T-cell (primary cell): ENCODE measurements at regions of chr19 and their contacts with region 1.

Region 1: GRCh38 chr19:54077334-54077733 is 3.8 kb downstream of the TARM1 start:
- DNase-seq: no peak
- ATAC-seq: no peak
- H3K4me3 ChIP-seq: no peak overlapping the region
- H3K4me3 Mint-ChIP-seq: no peak overlapping the region
- H3K27ac ChIP-seq: no peak overlapping the region
- H3K27ac Mint-ChIP-seq: no peak overlapping the region
- H3K4me1 ChIP-seq: no peaks in the 10 kb centered on the region
- H3K4me1 Mint-ChIP-seq: no peaks in the 10 kb centered on the region
- H3K27me3 ChIP-seq: peaks cover 0 to 18% of the 10 kb centered on the region in 2 experiments
- H3K27me3 Mint-ChIP-seq: peaks cover 0 to 5% of the 10 kb centered on the region in 2 donors

Region 2: DNA sequence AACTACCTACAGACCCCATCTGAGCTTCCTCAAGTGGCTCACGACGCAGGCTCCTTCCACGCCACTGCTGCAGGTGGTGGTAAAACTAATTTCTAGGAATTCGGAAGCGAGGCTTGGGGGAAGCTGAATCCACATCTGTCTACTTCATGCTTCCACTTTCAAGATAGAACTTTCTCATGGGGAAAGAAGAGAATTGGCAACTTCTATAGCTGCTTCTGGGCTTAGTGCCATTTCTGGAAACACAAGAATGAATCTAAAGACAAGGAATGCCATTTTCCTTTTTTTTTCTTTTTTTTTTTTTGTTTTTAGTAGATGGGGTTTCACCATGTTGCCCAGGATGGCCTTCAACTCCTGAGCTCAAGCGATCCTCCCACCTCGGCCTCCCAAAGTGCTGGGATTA is 250.5 kb before region 1 on chr19:
- CTCF ChIA-PET with region 1: interaction called in 1 of 2 experiments, 10 read pairs
- POLR2A ChIA-PET with region 1: no interaction called
- DNase-seq: no peak
- ATAC-seq: no peak
- H3K4me3 ChIP-seq: no peak overlapping the region
- H3K4me3 Mint-ChIP-seq: no peak overlapping the region
- H3K27ac ChIP-seq: no peak overlapping the region
- H3K27ac Mint-ChIP-seq: no peak overlapping the region
- H3K4me1 ChIP-seq: no peaks in the 10 kb centered on the region
- H3K4me1 Mint-ChIP-seq: no peaks in the 10 kb centered on the region
- H3K27me3 ChIP-seq: peaks cover 0 to 51% of the 10 kb centered on the region in 2 experiments
- H3K27me3 Mint-ChIP-seq: peaks cover 44 to 50% of the 10 kb centered on the region in 2 donors

Region 3: DNA sequence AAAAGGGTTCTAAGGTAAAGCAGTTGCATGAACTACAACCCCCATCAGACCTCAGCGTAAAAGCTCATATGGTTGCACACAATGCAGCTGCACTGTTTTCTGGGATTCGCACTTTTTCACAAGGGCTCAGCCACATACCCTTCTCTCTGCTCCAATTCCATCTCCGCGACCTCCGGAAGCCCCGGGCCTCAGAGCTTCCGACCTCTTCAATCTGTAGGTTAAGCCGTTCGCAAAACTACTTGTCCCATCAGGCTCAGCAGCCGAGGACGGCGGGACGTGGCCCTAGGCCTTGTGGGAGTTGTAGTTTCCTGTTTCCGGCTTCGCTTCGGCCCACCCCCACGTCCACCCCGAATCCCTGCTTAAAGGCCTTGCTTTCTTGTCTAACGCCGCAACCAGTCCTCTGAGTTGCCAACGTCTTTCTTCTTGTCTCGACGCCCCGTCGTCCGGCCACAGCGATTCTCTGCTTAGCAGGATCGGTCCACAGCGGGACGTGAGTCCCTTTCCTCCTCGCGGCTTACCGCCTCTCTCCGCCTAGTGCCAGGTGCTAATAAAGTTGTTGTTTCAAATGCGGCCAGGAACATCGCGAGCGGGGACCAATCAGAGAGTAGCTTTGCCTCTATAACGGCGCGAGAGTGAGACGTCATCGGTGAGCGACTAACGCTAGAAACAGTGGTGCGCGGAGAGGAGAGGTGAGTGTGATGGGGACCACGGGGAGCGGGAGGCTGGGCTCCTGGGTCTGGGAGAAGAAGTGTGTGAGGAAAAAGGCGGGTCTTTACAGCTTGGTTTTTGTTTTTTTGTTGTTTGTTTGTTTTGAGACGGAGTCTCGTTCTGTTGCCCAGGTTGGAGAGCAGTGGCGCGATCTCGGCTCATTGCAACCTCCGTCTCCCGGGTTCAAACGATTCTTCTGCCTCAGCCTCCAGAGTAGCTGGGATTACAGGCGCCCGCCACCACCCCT is 38.1 kb after region 1 on chr19 and contains the starts of genes PRPF31 and TFPT:
- CTCF ChIA-PET with region 1: no interaction called
- POLR2A ChIA-PET with region 1: no interaction called
- DNase-seq: peak; percentile 92 to 99 (median 95)
- ATAC-seq: peak; percentile 89 to 91 (median 90)
- H3K4me3 ChIP-seq: peak within 1 kb of the TSS; percentile 82 to 98
- H3K4me3 Mint-ChIP-seq: peak within 1 kb of the TSS; percentile 84 to 91 (median 89)
- H3K27ac ChIP-seq: peak within 1 kb of the TSS; percentile 78
- H3K27ac Mint-ChIP-seq: peak within 1 kb of the TSS; percentile 86 to 98
- H3K4me1 ChIP-seq: peaks cover 3 to 35% of the 10 kb centered on the region in 2 experiments
- H3K4me1 Mint-ChIP-seq: peaks cover 32 to 44% (median 40%) of the 10 kb centered on the region in 3 donors
- H3K27me3 ChIP-seq: no peaks in the 10 kb centered on the region
- H3K27me3 Mint-ChIP-seq: no peaks in the 10 kb centered on the region
- total RNA-seq, gene PRPF31: 56.3 to 75.3 (median 69.8) TPM
- total RNA-seq, gene TFPT: 12.0 to 27.0 (median 20.7) TPM

Region 4: GRCh38 chr19:54168174-54168917 is 91.0 kb after region 1 on chr19:
- CTCF ChIA-PET with region 1: no interaction called
- POLR2A ChIA-PET with region 1: no interaction called
- DNase-seq: peak; percentile 54 to 94 (median 80)
- ATAC-seq: peak; percentile 85 to 92 (median 86)
- H3K4me3 ChIP-seq: no peak overlapping the region
- H3K4me3 Mint-ChIP-seq: no peak overlapping the region
- H3K27ac ChIP-seq: no peak overlapping the region
- H3K27ac Mint-ChIP-seq: no peak overlapping the region
- H3K4me1 ChIP-seq: peaks cover 0 to 29% of the 10 kb centered on the region in 2 experiments
- H3K4me1 Mint-ChIP-seq: peaks cover 10 to 29% (median 18%) of the 10 kb centered on the region in 3 donors
- H3K27me3 ChIP-seq: peaks cover 0 to 24% of the 10 kb centered on the region in 2 experiments
- H3K27me3 Mint-ChIP-seq: no peaks in the 10 kb centered on the region